Heart right ventricle (tissue), 16 donors: ENCODE measurements at regions of chr19 and their contacts with region 1.

Region 1: DNA sequence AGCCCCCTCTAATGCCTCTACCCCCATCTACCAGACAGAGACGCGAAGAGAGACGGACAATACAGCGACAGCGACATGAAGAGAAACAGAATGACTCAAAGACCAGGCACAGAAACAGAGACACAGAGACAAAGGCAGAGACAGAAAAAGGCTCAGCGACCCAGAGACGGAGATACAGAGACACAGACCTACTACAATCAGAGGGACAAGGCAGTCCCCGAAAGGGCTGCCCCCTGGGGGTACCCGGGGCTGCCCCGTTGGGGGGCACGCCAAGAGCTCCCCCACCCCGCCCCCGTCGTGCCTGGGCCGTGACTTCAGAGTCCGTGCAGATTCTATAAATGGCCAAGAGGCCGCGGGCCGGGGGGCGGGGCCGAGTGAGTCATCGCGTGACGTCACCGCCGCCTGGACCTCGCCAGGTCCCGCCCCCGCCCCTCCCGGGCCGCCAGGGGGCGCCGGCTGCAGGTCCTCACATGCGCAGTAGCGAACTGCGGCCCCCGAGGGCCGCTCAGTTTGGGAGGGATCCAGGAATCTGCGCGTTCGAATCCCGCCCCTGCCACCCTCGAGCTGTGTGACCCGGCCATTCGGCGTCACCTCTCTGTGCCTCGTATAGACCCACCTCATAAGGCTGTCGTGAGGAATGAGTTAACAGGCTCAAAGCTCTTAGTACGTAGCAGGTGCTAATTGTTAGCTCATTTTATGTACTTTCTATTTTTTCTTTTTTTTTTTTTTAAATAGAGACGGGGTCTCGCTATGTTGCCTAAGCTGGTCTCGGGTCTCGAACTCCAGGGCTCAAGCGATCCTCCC is 2.7 kb upstream of the CNN1 start:
- DNase-seq: peak; percentile 90 to 94
- ATAC-seq: peak; percentile 79 to 94 (median 89)
- H3K4me3 ChIP-seq: peak overlapping the region in 9 of 10 donors; percentile 22 to 56 (median 46)
- H3K27ac ChIP-seq: peak overlapping the region; percentile 66 to 94 (median 86)
- H3K4me1 ChIP-seq: peaks cover 0 to 33% (median 22%) of the 10 kb centered on the region in 9 donors
- H3K27me3 ChIP-seq: peaks cover 0 to 23% (median 0%) of the 10 kb centered on the region in 7 donors
- CTCF ChIP-seq: peak; percentile 86 to 99 (median 96)

Region 2: DNA sequence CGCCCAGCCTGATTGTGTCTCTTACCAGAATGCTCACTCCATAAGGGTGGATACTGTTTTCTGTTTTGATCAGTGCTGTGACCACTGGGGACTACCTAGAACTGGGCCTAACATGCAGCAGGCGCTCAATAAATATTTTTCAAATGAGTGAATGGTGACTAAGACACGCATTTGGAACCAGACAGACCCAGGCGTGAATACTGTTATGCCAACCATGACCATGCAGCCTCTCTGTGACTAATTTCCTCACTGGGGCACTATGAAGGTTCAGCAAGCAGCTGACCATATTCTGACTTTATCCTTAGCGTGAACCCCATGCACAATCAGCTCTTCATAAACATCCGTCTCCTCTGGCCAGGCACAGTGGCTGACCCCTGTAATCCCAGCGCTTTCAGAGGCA is 367.4 kb before region 1 on chr19:
- intact Hi-C with region 1: no loop called
- DNase-seq: no peak
- ATAC-seq: no peak
- H3K4me3 ChIP-seq: no peak overlapping the region
- H3K27ac ChIP-seq: peak overlapping the region in 3 of 10 donors; percentile 15 to 41 (median 16)
- H3K4me1 ChIP-seq: peaks cover 8 to 43% (median 31%) of the 10 kb centered on the region in 9 donors
- H3K27me3 ChIP-seq: no peaks in the 10 kb centered on the region
- CTCF ChIP-seq: no peak

Region 3: GRCh38 chr19:11227201-11227886 is 308.6 kb before region 1 on chr19:
- intact Hi-C with region 1: no loop called
- DNase-seq: no peak
- ATAC-seq: peak in 3 of 8 donors; percentile 22 to 31 (median 23)
- H3K4me3 ChIP-seq: no peak overlapping the region
- H3K27ac ChIP-seq: no peak overlapping the region
- H3K4me1 ChIP-seq: no peaks in the 10 kb centered on the region
- H3K27me3 ChIP-seq: no peaks in the 10 kb centered on the region
- CTCF ChIP-seq: peak in 1 of 9 donors; percentile 7

Region 4: DNA sequence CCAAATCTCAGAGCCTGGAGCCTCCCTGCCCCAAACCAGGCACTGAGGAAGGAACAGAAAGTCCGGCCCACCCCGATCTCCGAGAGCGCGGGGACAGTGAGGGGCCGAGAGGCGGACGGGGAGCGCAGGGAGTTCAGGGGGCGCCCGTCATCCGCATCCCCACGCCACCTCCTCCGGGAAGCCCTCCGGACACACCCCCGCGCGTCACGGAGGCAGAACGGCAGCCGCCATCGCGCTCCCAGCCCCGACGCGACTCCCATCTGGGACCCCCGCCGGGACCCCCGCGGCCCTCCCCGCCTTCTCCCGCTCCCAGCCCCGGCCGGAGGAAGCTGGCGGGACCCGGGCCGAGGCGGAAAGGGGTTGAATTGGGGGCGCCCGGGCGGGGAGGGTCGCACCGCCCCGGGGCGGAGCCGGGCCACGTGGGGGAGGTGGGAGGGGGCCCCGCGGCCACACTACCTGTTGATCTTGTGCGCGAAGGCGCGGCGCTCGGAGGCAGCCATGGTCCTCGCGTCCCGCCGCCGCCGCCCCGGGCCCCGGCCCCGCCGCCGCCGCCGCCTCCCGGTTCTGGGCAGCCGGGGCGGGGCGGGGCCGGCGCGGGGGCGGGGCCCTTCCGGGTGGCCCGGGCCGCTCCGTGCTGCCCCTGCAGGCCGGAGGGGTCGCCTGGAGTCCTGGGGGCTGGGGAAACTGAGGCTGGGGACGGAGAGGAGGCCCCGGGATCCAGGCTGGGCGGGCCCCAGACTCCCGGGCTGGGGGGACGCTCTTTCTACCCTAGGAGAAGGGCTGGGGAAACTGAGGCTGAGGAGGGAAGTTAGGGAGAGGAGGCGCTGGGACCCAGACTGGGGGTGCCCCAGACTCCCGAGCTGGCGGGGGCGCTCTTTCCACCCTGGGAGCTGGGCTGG is 273.8 kb before region 1 on chr19 and contains the start of gene DOCK6:
- intact Hi-C with region 1: no loop called
- DNase-seq: peak in 1 of 2 donors; percentile 56
- ATAC-seq: peak; percentile 24 to 72 (median 42)
- H3K4me3 ChIP-seq: peak within 1 kb of the TSS; percentile 51 to 98 (median 76)
- H3K27ac ChIP-seq: peak within 1 kb of the TSS; percentile 88 to 99 (median 93)
- H3K4me1 ChIP-seq: peaks cover 2 to 54% (median 12%) of the 10 kb centered on the region in 9 donors
- H3K27me3 ChIP-seq: peaks cover 0 to 38% (median 0%) of the 10 kb centered on the region in 7 donors
- CTCF ChIP-seq: peak in 7 of 9 donors; percentile 33 to 64 (median 49)
- total RNA-seq, gene DOCK6: 27.6 to 57.2 (median 40.2) TPM

Region 5: GRCh38 chr19:11558881-11559828 is 23.2 kb after region 1 on chr19 and contains the start of gene ELOF1:
- intact Hi-C with region 1: loop called in 1 of 10 experiments (anchors 2 kb)
- DNase-seq: peak; percentile 97 to 98
- ATAC-seq: peak; percentile 97 to 99 (median 99)
- H3K4me3 ChIP-seq: peak within 1 kb of the TSS; percentile 61 to 96 (median 82)
- H3K27ac ChIP-seq: peak within 1 kb of the TSS; percentile 15 to 87 (median 74)
- H3K4me1 ChIP-seq: peaks cover 9 to 44% (median 36%) of the 10 kb centered on the region in 9 donors
- H3K27me3 ChIP-seq: no peaks in the 10 kb centered on the region
- CTCF ChIP-seq: peak in 3 of 9 donors; percentile 24 to 45 (median 37)
- total RNA-seq, gene ELOF1: 24.9 to 37.5 (median 30.9) TPM